Activated T-helper 2 cell treated with anti-CD3 and anti-CD28 coated beads, Interferon-gamma antibody, Interleukin-2, Interleukin-4, amounts not matched to agents 10 μg/mL and 5 μg/mL and 100 μg/mL, durations not matched to agents 14 hours and 24 hours and 36 hours (primary cell): ENCODE measurements at regions of chr18 and their contacts with region 1.

Region 1: GRCh38 chr18:58671111-58671631 is at the start of gene MALT1:
- DNase-seq: peak; percentile 93
- H3K4me3 Mint-ChIP-seq: peak within 1 kb of the TSS; percentile 93
- H3K27ac Mint-ChIP-seq: peak within 1 kb of the TSS; percentile 88
- H3K4me1 Mint-ChIP-seq: peaks cover 59% of the 10 kb centered on the region
- H3K27me3 Mint-ChIP-seq: peaks cover 3% of the 10 kb centered on the region
- total RNA-seq, gene MALT1: 23.5 and 23.9 TPM in 2 replicates

Region 2: DNA sequence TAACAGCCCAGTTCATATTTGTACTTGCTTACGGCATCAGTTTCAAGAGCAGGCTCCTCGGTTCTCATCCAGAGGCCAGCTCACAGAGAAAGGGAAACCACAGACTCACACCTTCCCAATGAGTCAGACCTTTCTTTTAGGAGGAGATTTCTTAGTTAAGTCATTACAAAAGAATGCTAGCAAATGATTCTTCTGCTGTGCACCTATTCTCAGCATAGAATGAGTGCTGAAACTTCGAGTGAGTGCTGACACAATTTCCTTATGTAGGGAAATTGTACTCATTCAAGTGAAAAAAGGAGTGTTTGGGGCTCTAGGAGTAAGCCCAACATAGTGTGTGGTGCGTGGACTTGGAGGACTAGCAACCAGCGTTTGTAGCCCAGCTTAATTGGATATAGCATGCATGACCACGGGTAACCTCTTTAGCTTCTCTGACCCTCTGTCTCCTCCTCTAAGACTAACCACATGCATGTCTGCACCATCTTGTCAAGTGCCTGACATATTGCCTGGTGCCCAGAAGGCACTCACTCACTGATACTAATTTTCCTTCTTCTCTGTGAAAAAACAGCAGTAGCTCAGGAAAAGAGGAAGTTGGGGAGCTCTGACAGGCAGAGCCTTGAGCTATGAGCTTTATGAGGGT is 129.3 kb before region 1 on chr18:
- intact Hi-C with region 1: loop called (anchors 1 kb)
- DNase-seq: peak; percentile 30
- H3K4me3 Mint-ChIP-seq: no peak overlapping the region
- H3K27ac Mint-ChIP-seq: peak overlapping the region; percentile 71
- H3K4me1 Mint-ChIP-seq: peaks cover 58% of the 10 kb centered on the region
- H3K27me3 Mint-ChIP-seq: peaks cover 28% of the 10 kb centered on the region

Region 3: DNA sequence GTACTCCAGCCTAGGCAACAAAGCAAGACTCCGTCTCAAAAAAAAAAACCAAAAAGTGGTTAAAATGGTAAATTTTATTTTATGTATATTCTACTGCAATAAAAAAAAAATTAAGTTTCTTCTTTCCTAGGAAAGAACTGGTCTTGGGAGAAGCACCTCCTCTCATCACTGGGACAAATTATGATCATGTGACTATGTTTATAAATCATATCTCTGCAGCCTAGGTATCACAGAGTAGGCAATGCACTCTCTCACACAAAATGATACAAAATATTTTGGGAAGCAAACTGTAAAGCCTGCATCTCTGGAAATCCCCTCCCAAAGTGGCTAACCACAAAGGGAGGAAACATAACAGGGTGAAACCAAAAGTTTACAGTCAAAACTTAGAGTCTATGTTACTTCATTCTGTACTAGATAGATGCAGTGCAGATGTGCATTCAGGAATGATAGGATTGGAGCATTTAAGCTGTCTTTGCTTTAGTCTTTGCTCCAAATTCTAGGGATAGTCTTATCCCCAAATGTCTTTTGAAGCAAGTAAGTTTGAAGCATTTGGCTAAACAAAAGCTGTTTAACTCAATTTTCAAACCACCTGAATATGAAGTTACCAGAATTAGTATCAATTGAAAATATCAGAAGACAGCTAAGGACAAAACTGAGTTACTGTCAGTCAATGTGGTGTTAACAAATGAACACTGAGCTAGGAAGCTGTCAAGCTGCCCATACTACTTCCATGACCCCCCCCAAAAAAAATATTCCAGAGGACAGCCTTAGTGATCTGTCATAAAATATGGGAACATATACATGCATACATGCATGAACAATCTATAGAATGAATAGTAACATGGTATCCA is 21.0 kb before region 1 on chr18:
- intact Hi-C with region 1: loop called (anchors 2 kb)
- DNase-seq: peak; percentile 30
- H3K4me3 Mint-ChIP-seq: peak overlapping the region; percentile 11
- H3K27ac Mint-ChIP-seq: no peak overlapping the region
- H3K4me1 Mint-ChIP-seq: peaks cover 45% of the 10 kb centered on the region
- H3K27me3 Mint-ChIP-seq: no peaks in the 10 kb centered on the region

Region 4: GRCh38 chr18:58716060-58716756 is 45.0 kb after region 1 on chr18:
- intact Hi-C with region 1: loop called (anchors 2 kb)
- DNase-seq: no peak
- H3K4me3 Mint-ChIP-seq: peak overlapping the region; percentile 31
- H3K27ac Mint-ChIP-seq: no peak overlapping the region
- H3K4me1 Mint-ChIP-seq: peaks cover 28% of the 10 kb centered on the region
- H3K27me3 Mint-ChIP-seq: no peaks in the 10 kb centered on the region

Region 5: DNA sequence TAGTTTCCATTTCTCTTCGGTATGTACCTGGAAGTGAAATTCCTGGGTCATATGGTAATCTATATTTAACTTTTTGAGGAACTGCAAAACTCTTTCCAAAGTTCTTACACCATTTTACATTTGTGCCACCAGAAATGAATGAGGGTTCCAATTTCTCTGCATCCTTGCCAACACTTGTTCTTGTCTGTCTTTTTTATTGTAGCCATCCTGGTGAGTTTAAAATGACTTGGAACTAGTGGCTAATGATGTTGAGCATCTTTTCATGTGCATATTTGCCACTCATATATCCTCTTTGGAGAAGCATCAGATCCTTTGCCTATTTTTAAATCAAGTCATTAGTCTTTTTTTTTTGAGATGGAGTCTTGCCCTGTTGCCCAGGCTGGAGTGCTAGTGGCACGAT is 59.4 kb after region 1 on chr18:
- intact Hi-C with region 1: no loop called
- DNase-seq: no peak
- H3K4me3 Mint-ChIP-seq: no peak overlapping the region
- H3K27ac Mint-ChIP-seq: no peak overlapping the region
- H3K4me1 Mint-ChIP-seq: peaks cover 2% of the 10 kb centered on the region
- H3K27me3 Mint-ChIP-seq: no peaks in the 10 kb centered on the region

Region 6: GRCh38 chr18:59358712-59359575 is 687.8 kb after region 1 on chr18 and contains the start of gene LMAN1:
- intact Hi-C with region 1: loop called (anchors 5 kb)
- DNase-seq: peak; percentile 89
- H3K4me3 Mint-ChIP-seq: peak within 1 kb of the TSS; percentile 100
- H3K27ac Mint-ChIP-seq: peak within 1 kb of the TSS; percentile 100
- H3K4me1 Mint-ChIP-seq: peaks cover 29% of the 10 kb centered on the region
- H3K27me3 Mint-ChIP-seq: peaks cover 9% of the 10 kb centered on the region
- total RNA-seq, gene LMAN1: 141 and 146 TPM in 2 replicates